ENCODE measurements at regions of chr22 and their contacts with region 1.

Region 1: DNA sequence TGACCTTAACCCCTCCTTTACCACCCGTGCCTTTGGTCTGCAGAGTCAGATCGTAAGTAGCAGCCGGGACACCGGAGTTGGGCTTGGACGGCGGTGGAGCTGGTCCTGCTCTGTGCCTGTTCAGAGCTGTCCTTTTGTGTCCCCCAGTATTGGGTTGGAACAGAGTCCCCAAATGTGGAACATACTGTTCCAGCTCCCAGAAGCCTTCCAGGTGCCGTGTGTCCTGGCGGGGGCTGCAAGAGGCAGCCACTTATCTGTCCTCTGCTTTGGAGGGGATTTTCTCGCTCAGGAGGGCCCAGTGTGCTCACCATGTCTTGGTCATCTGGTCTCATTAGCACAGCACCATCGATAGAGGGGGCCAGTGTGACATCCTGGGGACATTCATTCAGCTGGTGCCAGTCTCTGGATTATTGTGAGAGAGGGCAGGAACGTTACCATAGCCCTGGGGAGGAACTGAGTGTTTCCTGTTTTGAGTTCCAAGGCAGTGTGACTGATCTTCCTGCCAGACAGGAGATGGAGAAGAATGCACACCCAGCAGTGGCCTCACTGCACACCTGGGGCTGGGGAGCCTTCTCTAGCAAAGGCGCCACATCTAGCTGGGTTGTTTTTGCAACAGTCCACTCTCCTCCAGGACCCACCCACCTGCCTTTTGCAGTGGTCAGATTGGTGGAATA is 12.4 kb downstream of the CRELD2 start:
- DNase-seq: no peak
- ATAC-seq: no peak
- H3K4me3 Mint-ChIP-seq: no peak overlapping the region
- H3K27ac Mint-ChIP-seq: 0 out of 2 replicates have a peak overlapping the region, but pooled peaks have one; percentile 6
- H3K4me1 Mint-ChIP-seq: peaks cover 6% of the 10 kb centered on the region
- H3K27me3 Mint-ChIP-seq: peaks cover 12% of the 10 kb centered on the region; the same call in 1 of the 2 replicates
- CTCF ChIP-seq: no peak

Region 2: GRCh38 chr22:49970528-49971231 is 39.8 kb after region 1 on chr22:
- CTCF ChIA-PET with region 1: interaction called, 11 read pairs
- POLR2A ChIA-PET with region 1: no interaction called
- DNase-seq: peak; percentile 64
- ATAC-seq: peak; percentile 73
- H3K4me3 Mint-ChIP-seq: peak overlapping the region; percentile 61
- H3K27ac Mint-ChIP-seq: peak overlapping the region; percentile 57; the same call in 1 of the 2 replicates
- H3K4me1 Mint-ChIP-seq: peaks cover 6% of the 10 kb centered on the region
- H3K27me3 Mint-ChIP-seq: peaks cover 8% of the 10 kb centered on the region
- CTCF ChIP-seq: no peak

Region 3: GRCh38 chr22:50044485-50045118 is 113.7 kb after region 1 on chr22:
- CTCF ChIA-PET with region 1: no interaction called
- POLR2A ChIA-PET with region 1: no interaction called
- DNase-seq: no peak
- ATAC-seq: no peak
- H3K4me3 Mint-ChIP-seq: no peak overlapping the region
- H3K27ac Mint-ChIP-seq: no peak overlapping the region
- H3K4me1 Mint-ChIP-seq: no peaks in the 10 kb centered on the region
- H3K27me3 Mint-ChIP-seq: no peaks in the 10 kb centered on the region
- CTCF ChIP-seq: no peak